IMR-90 (cell line): ENCODE measurements at regions of chr19 and their contacts with region 1.

Region 1: DNA sequence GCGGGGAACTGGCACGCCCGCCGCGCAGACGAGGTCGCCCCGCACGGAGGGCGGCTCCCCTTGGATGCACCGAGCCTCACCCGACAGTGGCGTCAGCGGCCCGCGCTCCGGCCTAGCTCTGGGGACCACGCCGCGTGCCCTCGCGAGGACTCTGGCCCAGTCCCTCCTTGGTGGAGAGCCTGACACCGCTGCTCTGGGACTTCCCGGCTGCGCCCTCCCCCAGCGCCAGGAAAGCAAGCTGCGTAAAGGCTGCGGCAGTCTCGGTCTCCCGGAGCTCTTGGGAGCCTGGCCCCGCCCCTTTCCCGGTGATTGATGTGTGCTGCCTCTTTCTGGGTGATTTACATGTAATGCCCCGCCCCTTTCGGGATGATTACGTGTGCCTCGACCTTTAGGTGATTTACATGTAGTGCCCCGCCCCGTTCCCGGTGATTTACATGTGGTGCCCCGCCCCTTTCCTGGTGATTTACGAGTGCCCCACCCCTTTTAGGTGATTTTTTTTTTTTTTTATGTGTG is at the start of gene LENG9:
- DNase-seq: peak; percentile 97
- ATAC-seq: peak; percentile 65
- H3K4me3 ChIP-seq: peak within 1 kb of the TSS; percentile 52
- H3K27ac ChIP-seq: peak within 1 kb of the TSS; percentile 94
- H3K4me1 ChIP-seq: peaks cover 18% of the 10 kb centered on the region
- H3K27me3 ChIP-seq: no peaks in the 10 kb centered on the region
- CTCF ChIP-seq: no peak
- POLR2A ChIP-seq: peak; percentile 11; the same call in 1 of the 2 replicates
- RAD21 ChIP-seq: no peak
- total RNA-seq, gene LENG9: 0.83 and 1.1 TPM in 2 replicates

Region 2: GRCh38 chr19:54102421-54103169 is 361.0 kb before region 1 on chr19 and contains the start of gene NDUFA3:
- CTCF ChIA-PET with region 1: no interaction called
- POLR2A ChIA-PET with region 1: no interaction called
- dilution Hi-C with region 1: no loop called
- in situ Hi-C with region 1: loop called (anchors 25 kb)
- intact Hi-C with region 1: no loop called
- DNase-seq: peak; percentile 98
- ATAC-seq: peak; percentile 100
- H3K4me3 ChIP-seq: peak within 1 kb of the TSS; percentile 58
- H3K27ac ChIP-seq: peak within 1 kb of the TSS; percentile 53
- H3K4me1 ChIP-seq: no peaks in the 10 kb centered on the region
- H3K27me3 ChIP-seq: no peaks in the 10 kb centered on the region
- CTCF ChIP-seq: no peak
- POLR2A ChIP-seq: no peak
- RAD21 ChIP-seq: no peak
- total RNA-seq, gene NDUFA3: 7.9 and 24.7 TPM in 2 replicates

Region 3: GRCh38 chr19:54420383-54421168 is 43.0 kb before region 1 on chr19:
- CTCF ChIA-PET with region 1: no interaction called
- POLR2A ChIA-PET with region 1: no interaction called
- dilution Hi-C with region 1: no loop called
- in situ Hi-C with region 1: no loop called
- intact Hi-C with region 1: no loop called
- DNase-seq: no peak
- ATAC-seq: peak; percentile 15
- H3K4me3 ChIP-seq: no peak overlapping the region
- H3K27ac ChIP-seq: no peak overlapping the region
- H3K4me1 ChIP-seq: no peaks in the 10 kb centered on the region
- H3K27me3 ChIP-seq: peaks cover 30% of the 10 kb centered on the region
- CTCF ChIP-seq: no peak
- POLR2A ChIP-seq: no peak
- RAD21 ChIP-seq: no peak

Region 4: DNA sequence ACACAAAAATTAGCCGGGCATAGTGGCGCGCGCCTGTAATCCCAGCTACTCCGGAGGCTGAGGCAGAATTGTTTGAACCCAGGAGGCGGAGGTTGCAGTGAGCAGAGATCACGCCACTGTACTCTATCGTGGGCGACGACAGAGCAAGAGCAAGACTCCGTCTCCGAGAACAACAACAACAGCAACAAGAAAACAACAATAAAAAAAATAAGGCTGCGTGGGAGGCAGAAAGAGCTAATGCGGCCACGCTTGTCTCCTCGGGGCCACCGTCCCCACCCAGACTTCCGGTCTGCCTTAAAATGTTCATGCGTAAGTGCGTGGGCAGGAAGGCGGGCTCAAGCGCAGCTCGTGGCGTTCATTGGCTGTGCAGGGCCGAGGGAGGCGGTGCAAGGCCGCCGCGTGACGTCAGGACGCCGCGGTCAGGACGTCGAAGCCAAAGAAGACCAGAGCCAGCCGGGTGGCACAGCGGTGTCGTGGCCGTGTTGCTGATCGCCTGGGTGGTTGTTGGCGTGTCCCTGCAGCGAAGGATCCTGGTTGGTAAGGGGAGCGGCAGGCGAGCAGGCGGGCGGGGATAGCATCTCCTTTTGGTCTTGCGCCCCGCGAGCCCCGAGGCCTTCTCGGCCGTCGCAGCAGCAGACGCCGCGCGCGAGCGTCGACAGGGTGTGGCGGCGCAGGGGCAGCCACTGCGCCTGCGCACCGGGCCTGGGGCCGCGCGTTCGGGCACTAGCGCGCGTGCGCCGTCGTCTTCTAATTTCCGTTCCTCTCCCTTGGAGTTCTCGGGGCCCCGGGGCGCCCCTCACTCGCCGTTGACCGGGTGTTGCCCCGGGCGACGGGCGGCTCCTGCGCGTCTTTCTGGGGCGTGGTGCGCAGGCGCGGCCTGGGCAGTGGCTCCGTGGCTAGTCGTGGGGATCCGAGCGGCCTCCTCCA is 14.6 kb before region 1 on chr19 and contains the start of gene LENG8:
- CTCF ChIA-PET with region 1: interaction called, 4 read pairs
- POLR2A ChIA-PET with region 1: interaction called, 6 read pairs
- dilution Hi-C with region 1: no loop called
- in situ Hi-C with region 1: no loop called
- intact Hi-C with region 1: loop called (anchors 1 kb)
- DNase-seq: peak; percentile 99
- ATAC-seq: peak; percentile 91
- H3K4me3 ChIP-seq: peak within 1 kb of the TSS; percentile 69
- H3K27ac ChIP-seq: peak within 1 kb of the TSS; percentile 97
- H3K4me1 ChIP-seq: peaks cover 6% of the 10 kb centered on the region
- H3K27me3 ChIP-seq: no peaks in the 10 kb centered on the region
- CTCF ChIP-seq: no peak
- POLR2A ChIP-seq: peak; percentile 96
- RAD21 ChIP-seq: no peak
- total RNA-seq, gene LENG8: 17.5 and 21.1 TPM in 2 replicates

Region 5: DNA sequence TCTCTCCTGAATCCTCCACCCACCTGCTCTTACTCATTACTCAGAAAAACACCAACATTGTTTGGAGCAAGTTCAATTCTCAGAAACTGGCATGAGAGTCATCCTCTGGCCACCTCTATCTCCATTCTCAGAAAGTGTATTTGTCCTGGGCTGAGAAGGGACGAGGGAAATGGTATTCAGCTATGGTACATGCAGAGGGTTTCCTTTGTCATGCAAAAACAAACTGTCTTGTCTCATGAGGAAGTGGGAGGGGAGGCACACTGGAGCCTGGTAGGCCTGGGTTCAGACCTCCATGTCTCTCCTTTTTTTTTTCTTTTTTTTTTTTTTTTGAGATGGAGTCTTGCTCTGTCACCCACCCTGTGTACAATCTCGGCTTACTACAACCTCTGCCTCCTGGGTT is 78.1 kb after region 1 on chr19:
- CTCF ChIA-PET with region 1: no interaction called
- POLR2A ChIA-PET with region 1: no interaction called
- dilution Hi-C with region 1: no loop called
- in situ Hi-C with region 1: no loop called
- intact Hi-C with region 1: no loop called
- DNase-seq: no peak
- ATAC-seq: no peak
- H3K4me3 ChIP-seq: no peak overlapping the region
- H3K27ac ChIP-seq: no peak overlapping the region
- H3K4me1 ChIP-seq: no peaks in the 10 kb centered on the region
- H3K27me3 ChIP-seq: no peaks in the 10 kb centered on the region
- CTCF ChIP-seq: no peak
- POLR2A ChIP-seq: no peak
- RAD21 ChIP-seq: no peak

Region 6: GRCh38 chr19:55088543-55089341 is 625.2 kb after region 1 on chr19:
- CTCF ChIA-PET with region 1: no interaction called
- POLR2A ChIA-PET with region 1: no interaction called
- dilution Hi-C with region 1: no loop called
- in situ Hi-C with region 1: no loop called
- intact Hi-C with region 1: loop called (anchors 10 kb)
- DNase-seq: peak; percentile 43
- ATAC-seq: peak; percentile 38
- H3K4me3 ChIP-seq: no peak overlapping the region
- H3K27ac ChIP-seq: no peak overlapping the region
- H3K4me1 ChIP-seq: peaks cover 6% of the 10 kb centered on the region; the same call in 1 of the 2 replicates
- H3K27me3 ChIP-seq: peaks cover 20% of the 10 kb centered on the region
- CTCF ChIP-seq: peak; percentile 51
- POLR2A ChIP-seq: no peak
- RAD21 ChIP-seq: peak; percentile 25

Region 7: DNA sequence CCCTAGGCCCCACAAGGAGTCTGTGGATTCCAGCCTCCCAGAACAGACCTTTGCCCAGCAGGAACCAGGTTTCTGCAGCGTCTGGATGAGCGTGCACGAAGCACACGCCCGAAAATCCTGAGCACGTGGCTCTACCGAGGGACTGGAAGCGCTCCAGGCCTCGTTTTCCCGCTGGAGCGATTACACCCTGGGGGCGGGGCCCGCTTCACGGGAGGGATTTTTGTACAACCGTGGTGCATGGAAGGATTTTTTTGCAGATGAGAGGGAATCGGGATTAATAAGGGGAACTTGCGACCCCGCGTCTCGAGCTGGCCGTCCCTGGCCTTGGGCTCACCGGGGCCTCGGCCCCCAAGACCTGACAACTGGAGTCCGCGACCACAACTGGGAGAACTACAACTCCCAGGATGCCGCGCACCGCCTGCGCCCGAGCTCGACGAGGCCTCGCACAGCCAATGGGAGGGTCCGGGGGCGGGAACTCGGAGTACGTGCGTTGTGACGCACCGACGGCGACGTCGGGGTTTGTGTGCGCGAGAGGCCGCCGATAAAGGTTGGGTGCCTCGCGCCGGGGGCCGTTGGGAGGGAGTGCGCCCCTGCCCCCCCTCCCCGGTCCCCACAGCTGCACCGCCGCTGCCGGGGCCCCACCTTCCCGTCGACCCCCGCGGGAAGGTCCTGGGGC is 1012.7 kb after region 1 on chr19 and contains the start of gene ZNF628:
- CTCF ChIA-PET with region 1: no interaction called
- POLR2A ChIA-PET with region 1: no interaction called
- dilution Hi-C with region 1: no loop called
- in situ Hi-C with region 1: loop called (anchors 25 kb)
- intact Hi-C with region 1: no loop called
- DNase-seq: peak; percentile 98
- ATAC-seq: peak; percentile 96
- H3K4me3 ChIP-seq: peak within 1 kb of the TSS; percentile 73
- H3K27ac ChIP-seq: peak within 1 kb of the TSS; percentile 85
- H3K4me1 ChIP-seq: peaks cover 9% of the 10 kb centered on the region
- H3K27me3 ChIP-seq: no peaks in the 10 kb centered on the region
- CTCF ChIP-seq: no peak
- POLR2A ChIP-seq: peak; percentile 71
- RAD21 ChIP-seq: no peak
- total RNA-seq, gene ZNF628: 0.18 and 0.28 TPM in 2 replicates

Region 8: DNA sequence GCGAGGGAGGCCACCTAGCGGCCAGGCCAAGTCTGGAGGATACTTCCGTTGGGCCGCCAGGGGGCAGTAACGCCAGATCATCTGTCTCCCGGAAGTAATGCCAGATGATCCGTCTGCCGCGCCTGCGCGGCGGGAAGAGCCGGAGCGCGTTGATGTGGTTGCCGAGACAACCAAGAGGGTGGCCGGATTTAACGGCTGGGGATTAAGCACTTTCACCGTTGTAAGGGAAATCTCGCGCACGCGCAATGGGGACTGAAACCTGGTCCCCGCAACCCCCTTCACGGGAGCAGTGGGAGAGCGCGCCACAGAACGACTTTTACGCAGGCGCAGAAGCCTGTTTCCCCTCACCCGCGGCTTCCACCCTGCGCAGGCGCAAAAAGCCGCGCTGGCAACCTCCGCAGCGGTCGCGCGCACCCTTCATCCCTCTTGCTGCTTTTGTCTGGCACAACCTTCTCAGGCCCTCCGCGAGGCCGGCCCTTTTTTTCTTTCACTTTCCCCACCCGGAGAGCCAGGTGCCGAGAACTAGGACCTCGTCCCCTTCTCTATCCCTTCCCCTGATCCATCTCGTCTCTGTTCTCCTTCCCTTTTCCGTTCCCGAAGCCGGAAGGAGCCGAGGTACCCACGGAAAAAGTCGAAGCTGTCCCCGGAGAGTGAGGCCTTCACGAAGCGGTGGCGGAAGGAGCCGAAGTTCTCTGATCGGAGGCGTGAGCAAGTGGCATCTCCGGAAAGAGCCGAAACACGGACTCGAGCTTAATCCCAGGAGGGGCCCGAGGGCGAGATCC is 1190.4 kb after region 1 on chr19:
- CTCF ChIA-PET with region 1: no interaction called
- POLR2A ChIA-PET with region 1: no interaction called
- dilution Hi-C with region 1: no loop called
- in situ Hi-C with region 1: loop called (anchors 25 kb)
- intact Hi-C with region 1: no loop called
- DNase-seq: peak; percentile 99
- ATAC-seq: peak; percentile 81
- H3K4me3 ChIP-seq: peak overlapping the region; percentile 71
- H3K27ac ChIP-seq: peak overlapping the region; percentile 98
- H3K4me1 ChIP-seq: peaks cover 12% of the 10 kb centered on the region
- H3K27me3 ChIP-seq: no peaks in the 10 kb centered on the region
- CTCF ChIP-seq: peak; percentile 100
- POLR2A ChIP-seq: peak; percentile 70; the same call in 1 of the 2 replicates
- RAD21 ChIP-seq: peak; percentile 73

Region 9: DNA sequence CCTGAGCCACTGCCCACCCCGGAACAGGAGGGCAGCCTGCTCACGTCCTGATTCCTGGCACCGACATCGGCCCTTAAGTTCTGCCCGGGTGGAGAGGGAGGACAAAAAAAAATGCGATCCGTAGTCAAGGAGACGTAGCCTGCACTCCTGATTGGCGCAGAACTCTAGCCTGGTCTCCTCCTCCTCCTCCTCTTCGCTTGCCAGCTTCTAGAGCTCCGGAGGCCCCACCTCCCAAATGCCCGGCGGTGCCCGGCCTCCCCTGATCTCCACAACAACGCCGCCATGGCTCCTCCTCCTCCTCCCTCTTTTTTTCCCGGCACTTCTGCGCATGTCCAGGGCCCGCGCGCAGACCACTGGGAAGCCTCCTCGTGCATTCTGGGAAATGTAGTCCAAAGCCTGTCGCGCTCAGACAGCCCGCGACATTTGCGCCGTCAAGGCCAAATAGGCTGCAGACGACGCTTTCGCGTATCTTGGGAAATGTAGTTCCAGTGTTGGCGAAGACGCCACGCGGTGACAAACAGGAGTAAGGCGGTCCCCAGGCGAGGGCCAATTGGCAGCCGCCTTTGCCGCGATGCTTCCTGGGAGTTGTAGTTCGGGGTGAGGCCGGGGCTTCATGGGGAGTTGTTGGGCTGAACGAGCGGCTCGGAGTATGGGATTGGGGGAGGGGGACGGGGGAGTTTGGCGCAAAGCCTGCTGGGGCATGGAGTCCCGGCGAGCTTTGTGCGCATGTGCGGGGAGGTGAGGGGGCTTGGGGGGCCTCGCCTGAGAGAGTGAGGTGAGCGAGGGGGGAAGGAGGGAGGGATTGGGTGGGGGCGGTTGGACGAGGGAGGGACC is 1677.2 kb after region 1 on chr19 and contains the start of gene ZNF444:
- CTCF ChIA-PET with region 1: no interaction called
- POLR2A ChIA-PET with region 1: no interaction called
- dilution Hi-C with region 1: no loop called
- in situ Hi-C with region 1: loop called (anchors 25 kb)
- intact Hi-C with region 1: no loop called
- DNase-seq: peak; percentile 99
- ATAC-seq: peak; percentile 93
- H3K4me3 ChIP-seq: peak within 1 kb of the TSS; percentile 38
- H3K27ac ChIP-seq: peak within 1 kb of the TSS; percentile 73
- H3K4me1 ChIP-seq: no peaks in the 10 kb centered on the region; the same call in 1 of the 2 replicates
- H3K27me3 ChIP-seq: no peaks in the 10 kb centered on the region
- CTCF ChIP-seq: no peak
- POLR2A ChIP-seq: peak; percentile 63; the same call in 1 of the 2 replicates
- RAD21 ChIP-seq: no peak
- total RNA-seq, gene ZNF444: 2.5 and 3.3 TPM in 2 replicates